Activated CD4-positive, alpha-beta memory T cell treated with anti-CD3 and anti-CD28 coated beads for 36 hours (primary cell): ENCODE measurements at regions of chr11 and their contacts with region 1.

Region 1: DNA sequence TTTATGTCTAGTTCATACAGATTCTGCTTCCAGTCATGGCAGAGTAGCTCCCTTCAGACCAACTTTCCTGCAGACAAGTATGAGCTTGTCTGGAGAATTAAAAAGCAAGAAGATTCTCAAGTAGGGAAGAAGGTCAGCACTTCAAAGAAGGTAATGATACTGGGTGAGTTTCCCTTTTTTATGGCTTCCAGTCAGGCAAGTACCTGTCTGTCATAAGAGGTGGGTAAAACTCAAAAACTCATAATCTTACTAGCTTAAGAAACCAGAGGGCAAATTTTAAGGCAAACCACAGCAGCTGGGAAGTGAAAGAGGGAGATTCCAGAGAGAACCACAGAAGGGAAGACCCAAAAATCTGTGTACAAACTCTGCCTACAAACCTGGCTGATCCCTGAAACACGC is 54.2 kb downstream of the DENND5A start:
- DNase-seq: peak; percentile 43
- H3K4me3 Mint-ChIP-seq: no peak overlapping the region
- H3K27ac Mint-ChIP-seq: peak overlapping the region; percentile 75
- H3K4me1 Mint-ChIP-seq: peaks cover 66% of the 10 kb centered on the region
- H3K27me3 Mint-ChIP-seq: no peaks in the 10 kb centered on the region

Region 2: DNA sequence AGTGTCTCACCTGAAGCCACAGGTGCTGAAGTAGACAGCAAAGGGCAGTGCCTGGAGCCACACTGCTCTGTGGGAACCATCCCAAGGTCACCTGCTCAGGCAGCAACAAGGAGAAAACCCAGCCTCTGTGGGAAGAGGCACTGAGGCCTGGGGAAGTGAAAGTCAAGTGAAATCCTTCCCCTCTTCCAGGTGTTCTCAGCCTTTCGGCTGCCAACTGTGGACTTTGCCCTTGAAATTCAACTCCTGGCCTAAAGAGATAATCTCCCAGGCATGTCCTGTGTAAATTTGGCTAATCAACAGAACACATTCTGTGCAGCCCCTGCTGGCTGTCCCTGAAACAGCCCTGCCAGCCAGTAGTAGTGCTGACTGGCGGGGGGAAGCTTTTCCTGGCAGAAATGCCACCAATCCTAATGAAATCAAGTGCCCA is 416.2 kb before region 1 on chr11:
- CTCF ChIA-PET with region 1: no interaction called
- POLR2A ChIA-PET with region 1: no interaction called
- intact Hi-C with region 1: no loop called
- DNase-seq: no peak
- H3K4me3 Mint-ChIP-seq: no peak overlapping the region
- H3K27ac Mint-ChIP-seq: no peak overlapping the region
- H3K4me1 Mint-ChIP-seq: no peaks in the 10 kb centered on the region
- H3K27me3 Mint-ChIP-seq: peaks cover 10% of the 10 kb centered on the region

Region 3: DNA sequence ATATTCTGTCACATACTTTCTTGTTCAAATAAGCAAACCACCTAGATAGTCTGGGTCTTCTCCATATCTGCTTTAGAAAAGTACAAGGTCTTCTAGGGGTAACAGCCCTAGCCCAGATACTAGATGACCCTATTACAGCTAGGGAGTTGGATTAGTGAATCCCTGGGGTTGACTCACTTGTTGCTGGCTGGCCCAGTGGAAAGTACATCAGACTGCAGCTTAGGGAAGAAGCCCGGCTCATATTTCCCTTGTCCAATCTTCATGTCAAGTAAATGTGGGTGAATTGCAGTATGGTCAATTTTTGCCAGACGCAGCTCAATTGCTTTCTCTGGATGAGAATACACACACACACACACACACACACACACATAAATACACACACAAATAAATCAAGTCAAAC is 40.5 kb before region 1 on chr11:
- CTCF ChIA-PET with region 1: interaction called, 3 read pairs
- POLR2A ChIA-PET with region 1: interaction called, 3 read pairs
- intact Hi-C with region 1: loop called (anchors 5 kb)
- DNase-seq: no peak
- H3K4me3 Mint-ChIP-seq: no peak overlapping the region
- H3K27ac Mint-ChIP-seq: no peak overlapping the region
- H3K4me1 Mint-ChIP-seq: peaks cover 10% of the 10 kb centered on the region
- H3K27me3 Mint-ChIP-seq: no peaks in the 10 kb centered on the region

Region 4: GRCh38 chr11:9176550-9176949 is 34.4 kb before region 1 on chr11:
- CTCF ChIA-PET with region 1: interaction called, 4 read pairs
- POLR2A ChIA-PET with region 1: interaction called, 4 read pairs
- intact Hi-C with region 1: loop called (anchors 2 kb)
- DNase-seq: no peak
- H3K4me3 Mint-ChIP-seq: no peak overlapping the region
- H3K27ac Mint-ChIP-seq: no peak overlapping the region
- H3K4me1 Mint-ChIP-seq: peaks cover 14% of the 10 kb centered on the region
- H3K27me3 Mint-ChIP-seq: no peaks in the 10 kb centered on the region

Region 5: DNA sequence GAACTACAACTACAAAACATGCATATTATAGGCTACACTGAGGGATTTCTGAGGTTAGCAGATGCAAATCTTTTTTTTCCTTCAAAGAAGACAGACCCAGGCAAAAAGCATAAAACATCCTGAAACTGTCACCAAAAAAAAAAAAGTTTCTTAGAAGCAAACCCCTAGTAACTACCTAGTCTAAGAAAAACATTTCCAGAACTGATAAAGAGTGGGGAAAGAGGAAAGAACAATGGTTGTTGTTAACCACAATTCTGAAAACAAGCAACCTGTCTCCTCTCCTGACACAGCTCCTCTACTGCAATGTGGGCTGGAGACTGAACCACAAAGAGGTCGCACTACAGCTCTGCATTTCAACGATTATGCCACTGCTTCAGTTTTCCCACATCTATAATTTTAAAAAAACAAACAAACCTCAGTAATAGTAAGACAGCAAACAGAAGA is 39.2 kb after region 1 on chr11:
- CTCF ChIA-PET with region 1: no interaction called
- POLR2A ChIA-PET with region 1: interaction called, 5 read pairs
- intact Hi-C with region 1: loop called (anchors 1 kb)
- DNase-seq: peak; percentile 55
- H3K4me3 Mint-ChIP-seq: peak overlapping the region; percentile 15
- H3K27ac Mint-ChIP-seq: peak overlapping the region; percentile 67
- H3K4me1 Mint-ChIP-seq: peaks cover 51% of the 10 kb centered on the region
- H3K27me3 Mint-ChIP-seq: no peaks in the 10 kb centered on the region

Region 6: GRCh38 chr11:9314291-9315036 is 103.5 kb after region 1 on chr11 and contains the start of gene TMEM41B:
- CTCF ChIA-PET with region 1: no interaction called
- POLR2A ChIA-PET with region 1: no interaction called
- intact Hi-C with region 1: loop called (anchors 1 kb)
- DNase-seq: peak; percentile 99
- H3K4me3 Mint-ChIP-seq: peak within 1 kb of the TSS; percentile 97
- H3K27ac Mint-ChIP-seq: peak within 1 kb of the TSS; percentile 95
- H3K4me1 Mint-ChIP-seq: peaks cover 33% of the 10 kb centered on the region
- H3K27me3 Mint-ChIP-seq: peaks cover 10% of the 10 kb centered on the region
- total RNA-seq, gene TMEM41B: 33.6 to 36.1 TPM

Region 7: DNA sequence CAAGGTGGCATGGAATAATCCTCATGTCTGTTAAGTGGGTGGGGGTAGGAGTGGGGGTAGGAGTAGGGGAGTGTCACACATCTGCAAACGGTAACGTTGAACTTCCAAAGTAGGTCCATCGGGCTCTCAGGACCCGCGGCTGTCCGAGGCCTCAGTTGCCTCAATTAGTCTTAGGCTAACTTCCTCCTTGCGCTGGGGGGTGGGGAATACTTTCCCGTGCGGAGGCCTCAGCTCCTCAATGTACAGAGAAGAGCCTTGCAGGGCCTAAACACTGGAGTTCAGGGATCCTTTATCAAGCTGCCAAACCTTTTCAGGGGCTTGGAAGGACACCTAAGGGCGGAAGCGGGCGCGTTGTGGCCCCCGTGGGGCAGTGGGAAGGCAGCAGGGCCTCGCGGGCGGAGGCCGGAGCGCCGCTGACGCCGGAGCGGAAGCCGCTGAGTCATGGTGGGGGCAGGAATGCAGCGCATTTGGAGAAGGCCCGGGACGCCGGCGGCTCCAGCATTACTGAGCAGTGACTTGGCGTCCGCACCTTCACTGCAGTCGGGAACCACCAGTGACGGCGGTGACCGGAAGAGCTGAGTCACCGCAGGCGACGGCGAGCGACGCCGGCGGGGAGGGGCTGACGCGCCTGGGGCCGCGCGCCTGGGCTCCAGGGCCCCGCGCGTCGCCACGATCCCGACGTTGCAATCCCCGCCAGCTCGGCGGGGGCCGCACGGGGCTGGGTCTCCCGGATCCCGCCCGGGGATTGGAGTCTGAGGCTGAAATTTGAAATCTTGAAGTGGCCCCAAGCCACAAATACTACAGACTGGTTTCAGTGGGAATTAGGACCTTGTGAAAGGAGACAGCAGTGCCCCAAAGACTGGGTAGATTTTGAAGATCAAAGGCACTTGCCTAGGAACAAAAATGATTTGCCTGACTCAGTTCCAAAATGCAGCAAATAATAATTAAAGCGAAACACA is 153.3 kb after region 1 on chr11:
- CTCF ChIA-PET with region 1: no interaction called
- POLR2A ChIA-PET with region 1: no interaction called
- intact Hi-C with region 1: loop called (anchors 1 kb)
- DNase-seq: peak; percentile 93
- H3K4me3 Mint-ChIP-seq: peak overlapping the region; percentile 74
- H3K27ac Mint-ChIP-seq: peak overlapping the region; percentile 88
- H3K4me1 Mint-ChIP-seq: peaks cover 35% of the 10 kb centered on the region
- H3K27me3 Mint-ChIP-seq: no peaks in the 10 kb centered on the region

Region 8: DNA sequence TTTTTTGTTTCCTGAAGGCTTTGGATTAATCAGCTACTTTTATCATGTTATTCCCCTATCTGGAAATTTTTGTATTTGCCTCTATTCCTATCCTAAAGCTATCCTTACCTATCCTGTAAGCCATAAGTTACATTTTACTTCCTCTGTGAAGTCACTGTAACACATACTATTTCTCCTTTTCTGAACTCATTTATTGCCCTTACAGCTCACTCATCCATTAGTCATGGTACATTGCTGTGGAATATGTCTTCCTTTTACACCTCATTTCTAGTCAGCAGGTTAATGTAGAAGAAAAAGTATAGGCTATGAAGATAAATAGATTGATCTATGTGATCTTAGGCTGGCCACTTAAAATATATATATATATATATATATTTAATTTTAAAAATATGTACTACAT is 480.9 kb after region 1 on chr11:
- CTCF ChIA-PET with region 1: no interaction called
- POLR2A ChIA-PET with region 1: no interaction called
- intact Hi-C with region 1: no loop called
- DNase-seq: no peak
- H3K4me3 Mint-ChIP-seq: no peak overlapping the region
- H3K27ac Mint-ChIP-seq: no peak overlapping the region
- H3K4me1 Mint-ChIP-seq: no peaks in the 10 kb centered on the region
- H3K27me3 Mint-ChIP-seq: no peaks in the 10 kb centered on the region